ENCODE measurements at regions of chr1 and their contacts with region 1.

Region 1: DNA sequence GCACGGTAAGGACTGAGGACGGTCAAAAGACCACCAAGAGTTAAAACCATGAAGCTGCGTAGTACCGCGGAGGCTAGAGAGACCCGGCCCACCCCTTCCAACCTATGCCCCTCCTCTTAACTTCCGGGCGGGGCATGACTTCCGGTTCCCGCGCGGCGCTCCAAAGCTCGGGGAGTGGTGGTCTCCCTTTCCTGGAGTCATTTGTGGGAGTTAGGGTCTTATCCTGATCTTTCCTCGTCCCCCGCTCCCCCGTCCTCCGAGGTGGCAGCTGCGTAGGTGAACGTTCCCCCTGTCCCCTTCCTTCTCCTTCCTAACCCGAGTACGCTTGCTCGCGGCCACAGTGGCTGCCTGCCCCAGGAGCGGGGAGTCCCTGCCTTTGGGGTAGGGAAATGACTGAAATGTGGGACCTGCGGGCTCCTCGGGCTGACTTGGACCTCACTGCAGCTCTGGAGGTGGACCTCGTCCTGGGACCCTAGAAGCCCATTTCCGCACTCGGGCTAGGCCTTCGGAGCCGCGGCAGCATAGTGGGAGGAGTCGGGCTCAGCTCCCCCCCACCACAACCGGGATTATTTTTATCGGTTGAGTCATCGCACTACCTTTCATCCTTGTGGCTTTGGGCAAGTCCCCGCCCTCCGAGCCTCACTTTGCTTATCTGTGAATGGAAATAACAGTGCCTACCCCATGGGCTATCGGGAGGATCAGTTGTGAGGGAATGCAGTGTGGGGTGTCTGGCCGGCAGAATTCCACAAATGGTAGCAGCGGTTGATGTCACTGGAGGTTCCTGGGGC is 24.1 kb downstream of the CELA3A start:
- DNase-seq: peak; percentile 72 to 96 (median 86)
- ATAC-seq: peak; percentile 65 to 74
- H3K4me3 Mint-ChIP-seq: peak overlapping the region; percentile 89 to 99 (median 93)
- H3K27ac Mint-ChIP-seq: peak overlapping the region; percentile 97 to 100 (median 99)
- H3K4me1 Mint-ChIP-seq: peaks cover 17 to 71% (median 65%) of the 10 kb centered on the region in 4 donors
- H3K27me3 Mint-ChIP-seq: no peaks in the 10 kb centered on the region

Region 2: DNA sequence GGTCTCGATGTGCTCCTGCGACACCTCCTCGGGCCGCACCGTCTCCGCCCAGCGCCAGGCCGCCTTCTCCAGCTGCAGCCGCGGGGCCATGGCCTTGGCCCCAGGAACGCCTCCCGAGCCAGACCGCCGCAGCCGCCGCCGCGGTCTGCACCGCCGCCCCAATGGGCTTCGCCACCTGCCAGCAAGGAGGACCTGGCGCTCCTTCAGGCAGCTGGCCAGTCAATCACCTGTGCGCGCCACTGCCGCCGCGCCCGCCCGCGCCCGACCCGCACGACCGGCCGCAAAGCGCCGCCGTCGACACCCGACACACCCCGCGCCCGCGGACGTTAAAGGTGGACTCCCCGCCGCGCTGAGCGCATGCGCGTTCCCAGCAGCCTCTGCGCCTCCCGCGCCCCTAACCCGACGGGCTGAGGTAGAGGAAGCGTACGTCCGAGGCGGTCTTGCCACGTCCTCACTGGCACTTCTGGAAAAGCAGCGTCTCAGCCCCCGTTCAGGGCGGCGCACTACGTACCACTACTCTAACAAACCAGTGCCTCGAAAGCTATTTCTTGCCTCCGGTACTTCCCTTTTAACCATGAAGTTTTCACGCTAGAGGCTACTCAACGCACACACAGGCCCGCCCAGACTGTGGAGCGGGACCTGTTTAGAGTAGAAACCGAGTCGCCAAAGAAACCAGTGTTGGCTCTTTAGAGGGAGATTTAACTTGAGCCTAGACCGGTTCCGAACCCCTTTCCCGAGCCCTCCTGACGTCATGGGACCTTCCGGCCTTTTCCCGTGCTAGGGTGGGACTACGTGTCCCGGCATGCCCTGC is 242.5 kb before region 1 on chr1 and contains the start of gene USP48:
- POLR2A ChIA-PET with region 1: interaction called, 38 read pairs
- DNase-seq: peak; percentile 92 to 98 (median 96)
- ATAC-seq: peak; percentile 86 to 88
- H3K4me3 Mint-ChIP-seq: peak within 1 kb of the TSS; percentile 94 to 99 (median 98)
- H3K27ac Mint-ChIP-seq: peak within 1 kb of the TSS; percentile 99 to 100 (median 100)
- H3K4me1 Mint-ChIP-seq: peaks cover 19 to 37% (median 30%) of the 10 kb centered on the region in 4 donors
- H3K27me3 Mint-ChIP-seq: peaks cover 0 to 2% (median 0%) of the 10 kb centered on the region in 5 donors
- polyA plus RNA-seq, gene USP48: 25.8 to 30.0 (median 28.4) TPM

Region 3: DNA sequence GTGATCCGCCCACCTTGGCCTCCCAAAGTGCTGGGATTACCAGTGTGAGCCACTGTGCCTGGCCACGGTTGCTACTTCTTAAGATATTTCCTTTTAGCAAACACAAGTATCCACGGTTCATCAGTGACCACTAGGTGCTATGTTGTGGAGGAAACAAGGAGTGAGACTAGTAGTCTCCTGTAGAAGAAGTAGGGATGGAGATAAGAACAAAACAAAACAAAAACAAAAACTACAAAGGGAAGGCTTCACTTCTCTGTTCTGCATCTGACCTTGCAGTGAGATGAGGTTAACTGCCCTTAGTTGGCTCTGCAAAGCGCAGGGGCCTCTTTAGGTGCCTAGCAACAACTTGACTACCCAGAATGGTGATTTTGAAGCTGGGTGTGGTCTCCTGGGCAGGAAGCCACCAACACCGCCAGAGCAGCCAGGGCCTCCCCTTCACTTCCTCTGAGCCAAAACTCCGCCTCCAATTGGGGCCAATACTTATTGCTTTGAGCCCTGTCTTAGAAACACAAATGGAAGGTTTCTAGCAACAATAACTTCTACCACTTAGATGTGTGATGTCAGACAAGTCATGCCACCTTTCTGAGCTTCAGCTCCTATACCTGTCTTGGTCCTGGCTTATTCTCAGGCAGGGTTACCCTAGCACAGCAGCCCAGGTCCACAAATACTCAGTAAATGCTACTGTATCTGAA is 14.2 kb after region 1 on chr1:
- POLR2A ChIA-PET with region 1: interaction called, 261 read pairs
- DNase-seq: peak; percentile 72 to 98 (median 93)
- ATAC-seq: peak; percentile 91 to 93
- H3K4me3 Mint-ChIP-seq: peak overlapping the region; percentile 68 to 86 (median 78)
- H3K27ac Mint-ChIP-seq: peak overlapping the region; percentile 92 to 100 (median 99)
- H3K4me1 Mint-ChIP-seq: peaks cover 25 to 69% (median 61%) of the 10 kb centered on the region in 4 donors
- H3K27me3 Mint-ChIP-seq: no peaks in the 10 kb centered on the region

Region 4: DNA sequence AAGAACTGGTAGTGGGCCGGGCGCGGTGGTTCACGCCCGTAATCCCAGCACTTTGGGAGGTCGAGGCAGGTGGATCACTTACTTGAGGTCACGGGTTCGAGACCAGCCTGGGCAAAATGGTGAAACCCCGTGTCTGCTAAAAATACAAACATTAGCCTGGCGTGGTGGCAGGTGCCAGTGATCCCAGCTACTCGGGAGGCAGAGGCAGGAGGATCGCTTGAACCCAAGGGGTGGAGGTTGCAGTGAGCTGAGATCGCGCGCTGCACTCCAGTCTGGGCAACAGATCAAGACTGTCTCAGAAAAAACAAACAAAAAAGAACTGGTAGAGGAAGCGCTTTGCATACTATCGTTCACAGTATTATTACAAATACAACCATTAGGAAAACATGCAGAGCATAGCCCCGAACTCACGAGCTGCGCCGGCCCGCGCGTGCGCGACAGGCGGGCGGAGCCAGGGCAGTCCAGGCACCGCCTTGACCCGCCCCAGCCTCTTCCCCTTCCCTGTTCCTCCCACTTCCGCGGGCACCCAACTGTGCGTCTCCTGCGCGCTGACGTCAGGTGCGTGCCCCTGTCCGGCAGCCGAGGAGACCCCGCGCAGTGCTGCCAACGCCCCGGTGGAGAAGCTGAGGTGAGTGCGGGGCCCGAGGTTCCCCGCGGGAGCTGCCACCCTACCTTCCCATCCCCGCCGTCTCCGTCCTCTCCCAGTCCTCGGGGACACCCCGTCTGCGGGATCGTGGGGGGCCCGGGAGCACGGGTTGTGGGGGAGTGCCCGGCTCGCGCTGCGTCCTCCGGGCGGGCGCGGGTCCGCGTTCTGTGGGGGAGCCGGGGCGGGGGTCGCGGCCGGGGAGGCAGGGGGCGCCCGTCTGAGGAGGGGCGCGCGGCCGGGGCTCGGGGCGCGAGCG is 26.8 kb after region 1 on chr1 and contains the start of gene CDC42:
- POLR2A ChIA-PET with region 1: interaction called, 381 read pairs
- DNase-seq: peak; percentile 95 to 99 (median 98)
- ATAC-seq: peak; percentile 81 to 92
- H3K4me3 Mint-ChIP-seq: peak within 1 kb of the TSS; percentile 92 to 100 (median 96)
- H3K27ac Mint-ChIP-seq: peak within 1 kb of the TSS; percentile 96 to 100 (median 99)
- H3K4me1 Mint-ChIP-seq: peaks cover 29 to 75% (median 62%) of the 10 kb centered on the region in 4 donors
- H3K27me3 Mint-ChIP-seq: peaks cover 0 to 5% (median 0%) of the 10 kb centered on the region in 5 donors
- polyA plus RNA-seq, gene CDC42: 236 to 472 (median 393) TPM

Region 5: GRCh38 chr1:22075718-22076117 is 50.2 kb after region 1 on chr1:
- POLR2A ChIA-PET with region 1: interaction called, 10 read pairs
- DNase-seq: no peak
- ATAC-seq: peak; percentile 48 to 64
- H3K4me3 Mint-ChIP-seq: peak overlapping the region; percentile 29 to 85 (median 70)
- H3K27ac Mint-ChIP-seq: peak overlapping the region; percentile 63 to 95 (median 81)
- H3K4me1 Mint-ChIP-seq: peaks cover 41 to 95% (median 90%) of the 10 kb centered on the region in 4 donors
- H3K27me3 Mint-ChIP-seq: no peaks in the 10 kb centered on the region

Region 6: DNA sequence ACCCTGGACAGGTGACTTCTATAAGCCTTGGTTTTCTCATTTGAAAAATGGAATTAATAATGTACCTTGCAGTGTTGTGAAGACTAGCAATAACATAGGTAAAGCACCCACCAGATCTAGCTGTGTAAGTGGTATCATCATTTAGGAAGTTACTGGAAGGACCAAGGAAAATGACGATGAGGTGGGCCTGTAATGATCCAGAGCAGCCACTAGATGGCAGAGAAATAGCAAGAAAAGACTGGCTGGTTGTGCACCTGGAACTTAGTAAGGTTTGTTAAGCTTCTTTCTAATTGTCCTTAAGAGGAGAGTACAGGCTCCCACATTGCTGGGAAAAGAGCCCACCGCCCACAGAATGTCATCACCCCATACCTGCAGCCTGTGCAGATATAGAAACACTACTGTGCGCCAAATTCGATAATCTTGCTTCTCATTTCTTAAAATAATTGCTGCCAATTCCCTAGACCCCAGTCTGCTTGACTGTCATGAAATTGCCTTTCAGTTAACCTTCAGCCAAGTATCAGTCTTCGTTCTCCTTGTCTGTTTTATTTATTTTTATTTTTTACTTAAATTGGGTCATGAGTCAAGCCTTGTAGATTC is 80.1 kb after region 1 on chr1:
- POLR2A ChIA-PET with region 1: interaction called, 23 read pairs
- DNase-seq: peak in 7 of 10 donors; percentile 20 to 66 (median 44)
- ATAC-seq: peak; percentile 48 to 62
- H3K4me3 Mint-ChIP-seq: peak overlapping the region in 7 of 10 donors; percentile 16 to 70 (median 60)
- H3K27ac Mint-ChIP-seq: peak overlapping the region; percentile 61 to 93 (median 88)
- H3K4me1 Mint-ChIP-seq: peaks cover 42 to 84% (median 73%) of the 10 kb centered on the region in 4 donors
- H3K27me3 Mint-ChIP-seq: no peaks in the 10 kb centered on the region